ENCODE measurements at regions of chr13 and their contacts with region 1.

Region 1: GRCh38 chr13:39510316-39510695 is 92.7 kb downstream of the LHFPL6 start:
- DNase-seq: no peak
- H3K4me3 ChIP-seq: no peak overlapping the region
- H3K27ac ChIP-seq: peak overlapping the region; percentile 25
- H3K4me1 ChIP-seq: peaks cover 74% of the 10 kb centered on the region
- H3K27me3 ChIP-seq: no peaks in the 10 kb centered on the region
- CTCF ChIP-seq: no peak

Region 2: DNA sequence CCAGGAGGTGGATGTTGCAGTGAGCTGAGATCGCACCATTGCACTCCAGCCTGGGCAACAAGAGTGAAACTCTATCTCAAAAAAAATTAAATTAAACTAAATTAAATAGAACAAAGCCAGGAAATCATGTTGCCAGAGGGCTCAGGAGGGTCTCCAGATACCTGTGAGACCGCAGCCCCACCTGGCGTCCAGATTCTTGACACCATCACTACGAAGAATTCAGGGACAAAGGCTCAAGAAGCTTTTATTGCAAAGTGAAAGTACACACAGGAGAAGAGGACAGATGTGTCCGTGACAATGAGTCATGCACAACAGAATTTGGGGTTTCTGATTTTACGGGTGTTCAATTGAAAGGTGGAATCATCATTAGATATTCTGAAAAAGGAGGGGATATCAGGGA is 596.2 kb before region 1 on chr13:
- intact Hi-C with region 1: no loop called
- DNase-seq: no peak
- H3K4me3 ChIP-seq: no peak overlapping the region
- H3K27ac ChIP-seq: no peak overlapping the region
- H3K4me1 ChIP-seq: no peaks in the 10 kb centered on the region
- H3K27me3 ChIP-seq: peaks cover 14% of the 10 kb centered on the region
- CTCF ChIP-seq: no peak

Region 3: GRCh38 chr13:39073992-39074391 is 436.3 kb before region 1 on chr13:
- intact Hi-C with region 1: no loop called
- DNase-seq: no peak
- H3K4me3 ChIP-seq: no peak overlapping the region
- H3K27ac ChIP-seq: no peak overlapping the region
- H3K4me1 ChIP-seq: no peaks in the 10 kb centered on the region
- H3K27me3 ChIP-seq: no peaks in the 10 kb centered on the region
- CTCF ChIP-seq: no peak

Region 4: GRCh38 chr13:39586151-39586550 is 75.8 kb after region 1 on chr13:
- intact Hi-C with region 1: loop called (anchors 10 kb)
- DNase-seq: no peak
- H3K4me3 ChIP-seq: no peak overlapping the region
- H3K27ac ChIP-seq: no peak overlapping the region
- H3K4me1 ChIP-seq: peaks cover 99% of the 10 kb centered on the region
- H3K27me3 ChIP-seq: no peaks in the 10 kb centered on the region
- CTCF ChIP-seq: no peak

Region 5: DNA sequence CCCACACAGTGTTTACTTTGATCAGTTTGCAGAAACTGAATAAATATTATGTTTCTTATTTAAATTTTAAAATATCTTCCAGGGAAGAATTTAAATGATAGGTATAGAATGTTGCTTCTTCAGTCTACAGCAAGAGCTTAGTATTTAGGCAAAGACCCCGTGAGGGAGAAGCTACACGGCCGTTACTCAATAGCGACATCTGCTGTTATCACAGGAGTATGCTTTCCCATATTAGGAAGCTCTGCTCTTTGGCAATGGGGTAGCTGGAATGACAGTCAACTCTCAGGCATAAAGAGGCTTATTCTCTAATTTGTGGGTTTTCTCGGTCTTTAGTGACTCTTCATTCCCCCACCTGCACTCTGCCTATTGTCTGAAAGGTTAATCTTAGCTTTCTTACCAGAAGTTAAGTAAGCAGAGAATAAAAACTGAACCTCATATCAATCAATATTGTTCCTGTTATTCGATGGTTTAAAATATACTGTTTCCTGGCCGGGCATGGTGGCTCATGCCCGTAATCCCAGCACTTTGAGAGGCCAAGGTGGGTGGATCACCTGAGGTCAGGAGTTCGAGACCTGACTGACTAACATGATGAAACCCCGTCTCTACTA is 105.9 kb after region 1 on chr13:
- intact Hi-C with region 1: no loop called
- DNase-seq: no peak
- H3K4me3 ChIP-seq: no peak overlapping the region
- H3K27ac ChIP-seq: no peak overlapping the region
- H3K4me1 ChIP-seq: peaks cover 6% of the 10 kb centered on the region
- H3K27me3 ChIP-seq: no peaks in the 10 kb centered on the region
- CTCF ChIP-seq: peak; percentile 95

Region 6: GRCh38 chr13:39635564-39635963 is 125.3 kb after region 1 on chr13:
- intact Hi-C with region 1: no loop called
- DNase-seq: no peak
- H3K4me3 ChIP-seq: no peak overlapping the region
- H3K27ac ChIP-seq: no peak overlapping the region
- H3K4me1 ChIP-seq: no peaks in the 10 kb centered on the region
- H3K27me3 ChIP-seq: no peaks in the 10 kb centered on the region
- CTCF ChIP-seq: no peak